ENCODE measurements at regions of chr4 and their contacts with region 1.

Region 1: DNA sequence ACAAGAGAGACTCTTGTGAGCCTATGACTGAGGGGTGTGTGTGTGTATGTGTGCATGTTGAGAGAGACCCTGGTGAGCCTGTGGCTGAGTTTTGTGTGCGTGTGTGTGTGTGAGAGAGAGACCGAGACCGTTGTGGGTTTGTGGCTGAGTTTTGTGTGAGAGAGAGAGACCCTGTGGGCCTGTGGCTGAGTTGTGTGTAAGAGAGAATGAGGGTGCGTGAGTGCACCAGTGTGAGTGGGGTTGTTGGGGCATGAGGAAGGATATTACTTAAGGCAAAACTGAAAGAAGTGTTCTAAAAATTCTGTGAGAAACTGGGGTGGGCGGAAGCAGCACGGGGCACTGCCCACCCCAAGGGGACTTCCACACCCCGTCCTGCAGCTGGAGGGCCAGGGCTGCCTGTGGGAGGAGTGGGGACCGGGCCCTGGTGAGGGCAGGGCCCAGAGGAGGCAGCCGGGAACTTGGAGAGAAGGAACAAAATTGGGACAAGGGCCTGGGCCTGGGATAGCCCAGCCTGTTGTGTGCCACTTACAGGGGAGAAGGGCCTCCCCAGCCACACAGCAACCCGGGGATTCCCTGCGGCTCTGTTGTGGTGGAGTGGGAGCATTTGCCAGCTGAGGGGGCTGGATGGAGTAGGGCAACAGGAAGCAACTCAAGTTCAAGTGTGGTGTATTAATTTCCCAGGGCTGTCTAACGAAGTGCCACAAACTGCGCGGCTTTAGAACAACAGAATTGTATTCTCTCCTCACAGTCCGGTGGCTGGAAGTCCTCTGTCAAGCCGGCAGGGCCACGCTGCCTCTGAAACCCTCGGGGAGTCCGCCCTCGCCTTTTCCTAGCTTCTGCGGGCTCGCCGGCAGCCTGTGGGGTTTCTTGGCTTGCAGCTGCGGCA is 22.1 kb downstream of the TMEM131L start:
- DNase-seq: peak; percentile 50
- H3K4me3 ChIP-seq: no peak overlapping the region
- H3K27ac ChIP-seq: no peak overlapping the region
- H3K4me1 ChIP-seq: peaks cover 28% of the 10 kb centered on the region
- H3K27me3 ChIP-seq: no peaks in the 10 kb centered on the region
- CTCF ChIP-seq: no peak
- POLR2A ChIP-seq: no peak

Region 2: DNA sequence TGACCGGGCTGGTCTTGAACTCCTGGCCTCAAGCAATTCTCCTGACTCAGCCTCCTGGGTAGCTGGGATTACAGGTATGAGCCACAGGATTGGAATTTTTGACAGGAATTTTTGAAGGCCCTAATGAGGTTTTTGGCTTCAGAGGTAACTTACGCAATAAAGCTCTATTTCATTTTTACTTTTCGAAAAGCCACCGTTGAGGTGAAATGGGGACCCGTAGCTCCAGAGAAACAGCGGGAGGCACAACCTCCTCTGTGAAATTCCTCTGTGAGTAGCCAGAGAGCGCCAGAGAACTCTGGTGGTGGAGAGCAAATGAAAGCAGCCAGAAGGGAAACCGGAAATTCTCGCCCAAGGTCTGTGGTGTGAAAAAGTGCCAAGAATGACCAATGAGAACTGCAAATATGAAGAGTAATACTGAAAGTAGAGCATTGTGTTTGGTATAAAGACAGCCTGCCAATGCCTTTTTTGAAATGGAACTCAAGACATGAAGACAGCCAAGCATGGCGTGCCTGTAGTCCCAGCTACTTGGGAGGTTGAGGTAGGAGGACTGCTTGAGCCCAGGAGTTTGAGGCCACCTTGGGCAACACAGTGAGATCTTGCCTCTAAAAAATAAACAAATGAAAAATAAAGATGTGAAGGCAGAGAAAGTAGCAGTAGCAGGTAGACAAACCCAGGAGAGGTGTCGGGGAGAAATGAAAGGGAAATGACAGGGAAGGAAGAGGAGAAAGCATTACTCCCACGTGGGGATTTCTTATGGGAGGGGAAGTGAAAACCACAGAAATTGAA is 55.1 kb before region 1 on chr4:
- CTCF ChIA-PET with region 1: interaction called, 3 read pairs
- POLR2A ChIA-PET with region 1: no interaction called
- dilution Hi-C with region 1: no loop called
- intact Hi-C with region 1: loop called (anchors 2 kb)
- DNase-seq: peak; percentile 45
- H3K4me3 ChIP-seq: no peak overlapping the region
- H3K27ac ChIP-seq: no peak overlapping the region
- H3K4me1 ChIP-seq: no peaks in the 10 kb centered on the region
- H3K27me3 ChIP-seq: no peaks in the 10 kb centered on the region
- CTCF ChIP-seq: peak; percentile 45 to 46
- POLR2A ChIP-seq: no peak

Region 3: DNA sequence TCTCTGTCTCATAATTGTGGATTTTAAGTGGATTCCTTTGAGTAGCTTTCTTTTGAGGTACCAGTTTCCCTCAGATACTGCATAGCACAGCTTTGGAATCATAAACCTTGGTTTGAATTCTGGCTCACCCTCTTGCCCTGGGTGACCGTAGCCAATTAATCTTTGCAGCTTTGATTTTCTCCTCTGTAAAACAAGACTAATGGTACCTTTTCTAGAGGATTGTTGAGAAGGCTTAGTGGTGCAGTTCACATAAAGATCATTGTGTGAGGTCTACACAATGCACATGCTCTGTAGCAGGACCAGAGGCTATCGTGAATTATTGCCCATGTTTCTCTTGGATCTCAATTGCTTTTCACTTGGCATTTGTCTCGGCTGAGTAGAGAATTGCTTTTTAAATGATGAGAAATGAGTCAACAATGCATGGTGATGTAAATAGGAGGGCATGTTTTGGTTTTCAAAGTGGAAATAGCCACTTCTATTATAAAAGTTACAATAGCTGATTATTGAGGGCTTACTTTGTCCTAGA is 25.8 kb after region 1 on chr4:
- CTCF ChIA-PET with region 1: interaction called, 4 read pairs
- POLR2A ChIA-PET with region 1: no interaction called
- dilution Hi-C with region 1: no loop called
- intact Hi-C with region 1: loop called (anchors 1 kb)
- DNase-seq: peak; percentile 79
- H3K4me3 ChIP-seq: no peak overlapping the region
- H3K27ac ChIP-seq: peak overlapping the region; percentile 82
- H3K4me1 ChIP-seq: peaks cover 18% of the 10 kb centered on the region
- H3K27me3 ChIP-seq: no peaks in the 10 kb centered on the region
- CTCF ChIP-seq: no peak
- POLR2A ChIP-seq: no peak

Region 4: GRCh38 chr4:153531000-153531358 is 42.7 kb after region 1 on chr4:
- CTCF ChIA-PET with region 1: interaction called, 9 read pairs
- POLR2A ChIA-PET with region 1: no interaction called
- dilution Hi-C with region 1: no loop called
- intact Hi-C with region 1: loop called (anchors 5 kb)
- DNase-seq: no peak
- H3K4me3 ChIP-seq: no peak overlapping the region
- H3K27ac ChIP-seq: no peak overlapping the region
- H3K4me1 ChIP-seq: peaks cover 25% of the 10 kb centered on the region
- H3K27me3 ChIP-seq: no peaks in the 10 kb centered on the region
- CTCF ChIP-seq: peak in 1 of 2 donors; percentile 1
- POLR2A ChIP-seq: no peak

Measured in endothelial cell of umbilical vein (primary cell).